Esophagus squamous epithelium (tissue), 5 donors: ENCODE measurements at regions of chr2 and their contacts with region 1.

Region 1: DNA sequence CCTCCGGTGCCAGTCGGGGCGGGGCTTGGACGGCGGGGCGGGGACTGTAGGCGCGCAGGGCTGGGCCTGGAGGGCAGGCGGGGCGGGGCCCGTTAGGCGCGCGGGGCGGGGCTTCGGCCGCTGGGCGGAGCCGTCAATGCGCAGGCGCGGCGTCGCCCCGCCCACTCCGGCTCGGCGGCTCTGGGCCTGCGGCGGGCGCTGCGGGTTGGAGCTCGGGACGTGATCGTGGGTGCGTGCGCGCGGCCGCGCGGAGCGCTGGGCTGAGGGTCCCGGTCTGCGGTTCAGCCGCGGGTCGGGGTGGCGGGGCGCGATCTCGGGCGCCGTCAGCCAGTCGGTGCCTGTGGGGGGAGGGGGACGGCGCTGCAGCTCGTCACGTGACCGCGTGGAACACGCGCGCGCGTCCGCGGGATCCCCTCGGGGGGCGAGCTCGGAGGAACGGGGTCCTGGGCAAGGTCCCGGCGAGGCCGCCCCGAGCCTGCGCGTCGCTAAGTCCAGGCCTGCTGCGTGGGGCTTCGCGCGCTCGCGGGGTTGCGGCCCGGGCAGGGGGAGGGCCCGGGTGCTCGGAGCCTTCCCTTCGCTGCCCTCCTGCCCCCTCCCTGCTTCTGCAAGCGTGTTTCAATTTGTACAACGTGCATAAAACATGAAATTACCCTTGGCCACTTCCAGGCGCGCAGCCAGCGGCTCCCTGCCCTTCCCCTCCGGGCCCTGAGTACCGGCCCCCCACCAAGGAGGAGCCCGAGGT is at the start of gene D2HGDH:
- DNase-seq: peak; percentile 54
- H3K4me3 ChIP-seq: peak within 1 kb of the TSS; percentile 79 to 89 (median 82)
- H3K27ac ChIP-seq: peak within 1 kb of the TSS; percentile 89 to 97 (median 93)
- H3K4me1 ChIP-seq: peaks cover 7 to 53% (median 15%) of the 10 kb centered on the region in 3 donors
- H3K27me3 ChIP-seq: no peaks in the 10 kb centered on the region
- CTCF ChIP-seq: peak in 1 of 6 experiments; percentile 3
- POLR2A ChIP-seq: peak in 3 of 4 donors; percentile 48 to 91 (median 81)
- total RNA-seq, gene D2HGDH: 16.9 to 33.4 (median 23.6) TPM

Region 2: DNA sequence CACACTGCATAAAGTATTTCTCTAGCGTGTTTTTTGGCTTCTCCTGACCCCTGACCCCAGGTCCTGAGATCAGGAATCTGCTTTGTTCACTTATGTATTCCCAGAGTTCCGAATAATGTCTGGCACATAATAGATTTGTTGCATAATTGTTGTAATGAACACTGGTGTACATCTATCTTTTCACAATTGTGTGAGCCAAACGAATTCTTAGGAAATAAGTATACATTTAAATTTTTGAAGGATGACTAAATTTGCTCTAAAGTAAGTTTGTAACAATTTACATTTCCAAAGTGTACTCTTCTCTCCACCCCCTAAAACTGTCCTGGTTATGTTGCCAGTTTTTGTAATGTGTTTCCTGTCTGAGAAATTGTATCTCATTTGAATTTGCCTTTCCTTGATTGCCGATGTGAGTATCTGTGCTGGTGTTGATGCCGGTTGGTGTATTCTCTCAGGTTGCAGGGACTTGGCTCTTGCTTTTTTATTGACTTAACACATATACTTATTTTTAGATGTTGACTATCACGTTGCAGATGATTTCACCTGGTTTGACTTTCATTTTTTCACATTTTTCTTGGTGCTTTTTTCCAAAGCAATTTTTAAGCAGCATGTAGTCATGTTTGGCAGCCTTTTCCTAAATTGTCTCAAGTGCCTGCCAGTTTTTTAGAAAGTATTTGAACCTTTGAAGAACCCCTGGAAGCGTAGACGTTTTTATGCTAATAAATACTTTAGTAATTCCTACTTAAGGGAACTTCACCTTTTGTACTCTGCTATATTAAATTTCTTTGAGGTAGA is 394.6 kb before region 1 on chr2:
- intact Hi-C with region 1: no loop called
- DNase-seq: no peak
- H3K4me3 ChIP-seq: no peak overlapping the region
- H3K27ac ChIP-seq: peak overlapping the region in 1 of 4 donors; percentile 28
- H3K4me1 ChIP-seq: peaks cover 0 to 6% (median 0%) of the 10 kb centered on the region in 3 donors
- H3K27me3 ChIP-seq: no peaks in the 10 kb centered on the region
- CTCF ChIP-seq: no peak
- POLR2A ChIP-seq: no peak

Region 3: DNA sequence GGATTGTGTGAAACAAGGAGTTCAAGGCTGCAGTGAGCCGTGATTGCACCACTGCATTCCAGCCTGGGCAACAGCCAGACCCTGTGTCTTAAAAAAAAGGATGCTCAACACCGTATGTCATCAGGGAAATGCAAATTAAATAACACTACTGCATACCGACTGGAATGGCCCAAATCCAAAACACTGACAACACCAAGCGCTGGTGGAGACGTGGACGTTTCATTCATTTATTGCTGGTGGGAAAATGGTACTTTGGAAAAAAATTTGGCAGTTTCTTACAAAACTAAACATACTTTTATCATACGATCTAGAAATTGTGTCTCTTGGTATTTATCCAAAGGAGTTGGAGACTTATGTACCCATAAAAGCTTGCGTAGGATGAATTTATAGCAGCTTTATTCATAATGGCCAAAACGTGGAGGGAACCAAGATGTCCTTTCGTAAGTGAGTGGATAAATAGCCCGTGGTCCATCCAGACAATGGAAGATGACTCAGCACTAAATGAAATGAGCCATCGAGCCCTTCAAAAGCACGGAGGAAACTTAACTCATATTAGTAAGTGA is 98.5 kb after region 1 on chr2:
- intact Hi-C with region 1: no loop called
- DNase-seq: no peak
- H3K4me3 ChIP-seq: no peak overlapping the region
- H3K27ac ChIP-seq: no peak overlapping the region
- H3K4me1 ChIP-seq: no peaks in the 10 kb centered on the region
- H3K27me3 ChIP-seq: peaks cover 0 to 34% (median 0%) of the 10 kb centered on the region in 4 donors
- CTCF ChIP-seq: no peak
- POLR2A ChIP-seq: no peak

Region 4: GRCh38 chr2:241877989-241878970 is 143.6 kb after region 1 on chr2:
- intact Hi-C with region 1: loop called (anchors 10 kb)
- DNase-seq: no peak
- H3K4me3 ChIP-seq: no peak overlapping the region
- H3K27ac ChIP-seq: no peak overlapping the region
- H3K4me1 ChIP-seq: peaks cover 13 to 34% (median 24%) of the 10 kb centered on the region in 3 donors
- H3K27me3 ChIP-seq: no peaks in the 10 kb centered on the region
- CTCF ChIP-seq: peak; percentile 59 to 75 (median 67)
- POLR2A ChIP-seq: no peak